ENCODE measurements at regions of chr7 and their contacts with region 1.

Region 1: GRCh38 chr7:5549096-5549763 is 125.6 kb upstream of the TNRC18 start:
- DNase-seq: peak; percentile 94
- H3K4me3 Mint-ChIP-seq: peak overlapping the region; percentile 64
- H3K27ac Mint-ChIP-seq: peak overlapping the region; percentile 98
- H3K4me1 Mint-ChIP-seq: peaks cover 39% of the 10 kb centered on the region
- H3K27me3 Mint-ChIP-seq: no peaks in the 10 kb centered on the region
- CTCF ChIP-seq: no peak

Region 2: GRCh38 chr7:5532520-5533335 is 16.5 kb before region 1 on chr7:
- CTCF ChIA-PET with region 1: interaction called, 17 read pairs
- intact Hi-C with region 1: no loop called
- DNase-seq: peak; percentile 95
- H3K4me3 Mint-ChIP-seq: peak overlapping the region; percentile 92
- H3K27ac Mint-ChIP-seq: peak overlapping the region; percentile 83
- H3K4me1 Mint-ChIP-seq: peaks cover 39% of the 10 kb centered on the region
- H3K27me3 Mint-ChIP-seq: no peaks in the 10 kb centered on the region
- CTCF ChIP-seq: no peak

Region 3: DNA sequence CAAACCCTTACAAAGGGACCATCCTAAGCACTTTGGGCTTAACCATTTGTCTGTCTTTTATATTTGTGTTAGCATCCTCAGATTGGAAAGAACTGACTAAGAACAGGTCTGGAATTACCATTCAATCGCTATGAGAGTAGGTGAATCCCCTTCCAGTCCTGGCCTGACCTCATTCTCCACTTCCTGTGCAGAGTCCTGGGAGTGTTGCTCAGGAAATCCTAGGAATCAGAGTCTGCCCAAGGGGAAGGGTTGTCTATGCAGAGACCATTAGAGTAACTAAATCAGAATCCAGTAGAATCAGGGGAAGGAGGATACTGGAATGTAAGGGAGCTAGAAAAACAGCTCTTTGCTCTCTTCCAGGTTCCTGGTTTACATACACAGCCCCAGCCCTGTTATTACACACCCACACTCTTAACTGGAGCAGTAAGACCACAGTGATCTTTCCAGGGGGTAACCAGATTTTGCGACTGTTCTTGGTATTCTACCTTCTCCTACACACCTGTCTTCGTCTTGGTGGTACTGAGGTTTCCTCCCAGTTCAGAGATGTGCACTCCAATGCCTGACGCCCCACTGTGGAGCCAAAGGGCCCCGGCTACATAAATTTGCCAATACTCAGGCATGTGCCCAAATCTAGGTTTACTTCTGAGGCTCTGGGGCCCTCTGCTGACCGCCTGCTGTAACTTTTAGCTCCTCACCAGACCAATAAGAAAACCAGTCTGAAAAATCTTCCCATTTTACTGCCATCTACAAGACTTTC is 128.5 kb after region 1 on chr7:
- CTCF ChIA-PET with region 1: no interaction called
- intact Hi-C with region 1: no loop called
- DNase-seq: peak; percentile 65
- H3K4me3 Mint-ChIP-seq: no peak overlapping the region
- H3K27ac Mint-ChIP-seq: no peak overlapping the region
- H3K4me1 Mint-ChIP-seq: no peaks in the 10 kb centered on the region
- H3K27me3 Mint-ChIP-seq: no peaks in the 10 kb centered on the region
- CTCF ChIP-seq: peak; percentile 80

Measured in Calu3 (cell line).